Ovary (tissue), 10 donors: ENCODE measurements at regions of chr17 and their contacts with region 1.

Region 1: DNA sequence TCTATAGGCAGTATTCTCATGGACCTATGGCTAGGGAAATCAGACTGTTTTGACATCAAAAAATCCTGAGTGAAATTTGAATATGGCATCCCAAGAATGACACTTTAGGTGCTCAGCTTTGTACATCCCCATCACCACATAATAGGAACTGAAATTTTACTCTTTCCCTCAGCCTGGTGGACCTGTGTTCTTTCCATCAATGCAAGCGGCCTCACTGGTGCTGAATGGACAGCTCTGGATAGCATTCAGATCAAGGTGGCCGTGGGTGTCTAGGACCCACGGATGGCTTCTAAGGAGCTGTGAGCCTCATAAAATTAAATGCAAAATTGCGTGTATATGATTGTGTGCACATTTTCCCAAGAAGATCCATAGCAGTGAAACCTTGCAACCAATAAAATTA is 152.6 kb downstream of the MAP2K6 start:
- DNase-seq: no peak
- H3K4me3 ChIP-seq: no peak overlapping the region
- H3K27ac ChIP-seq: no peak overlapping the region
- H3K4me1 ChIP-seq: no peaks in the 10 kb centered on the region
- H3K27me3 ChIP-seq: no peaks in the 10 kb centered on the region
- CTCF ChIP-seq: no peak
- EP300 ChIP-seq: no peak
- POLR2A ChIP-seq: no peak

Region 2: DNA sequence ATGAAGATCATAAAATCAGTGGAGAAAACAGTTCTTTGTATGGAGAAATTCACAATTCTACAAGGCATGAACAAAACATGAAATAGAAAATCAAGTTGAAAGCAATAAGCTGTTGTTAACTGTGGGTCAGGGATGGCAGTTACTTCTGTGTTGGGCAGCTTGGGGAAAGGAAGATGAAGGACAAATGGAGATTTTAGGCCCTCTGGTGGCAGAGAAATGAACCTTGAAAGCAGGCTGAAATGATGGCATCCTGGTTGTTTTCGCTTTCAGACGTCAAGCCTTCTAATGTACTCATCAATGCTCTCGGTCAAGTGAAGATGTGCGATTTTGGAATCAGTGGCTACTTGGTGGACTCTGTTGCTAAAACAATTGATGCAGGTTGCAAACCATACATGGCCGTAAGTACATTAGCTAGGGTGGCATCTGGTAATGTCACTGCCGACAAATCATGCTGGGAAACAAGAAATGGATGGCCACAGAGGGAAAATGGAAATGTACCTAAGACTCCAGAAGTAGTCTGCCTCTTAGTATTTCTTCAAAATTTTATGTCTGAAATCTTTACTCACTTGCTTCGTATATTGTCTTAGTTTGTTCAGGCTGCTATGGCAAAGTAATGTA is 43.8 kb before region 1 on chr17:
- intact Hi-C with region 1: no loop called
- DNase-seq: peak in 1 of 5 donors; percentile 24
- H3K4me3 ChIP-seq: no peak overlapping the region
- H3K27ac ChIP-seq: no peak overlapping the region
- H3K4me1 ChIP-seq: no peaks in the 10 kb centered on the region
- H3K27me3 ChIP-seq: no peaks in the 10 kb centered on the region
- CTCF ChIP-seq: peak in 2 of 3 donors; percentile 42 to 61
- EP300 ChIP-seq: no peak
- POLR2A ChIP-seq: no peak

Region 3: GRCh38 chr17:70168977-70169708 is 602.0 kb after region 1 on chr17 and contains the start of gene KCNJ2:
- intact Hi-C with region 1: loop called in 1 of 4 experiments (anchors 10 kb)
- DNase-seq: peak; percentile 81 to 88 (median 86)
- H3K4me3 ChIP-seq: peak within 1 kb of the TSS; percentile 57
- H3K27ac ChIP-seq: peak within 1 kb of the TSS; percentile 78 to 86
- H3K4me1 ChIP-seq: peaks cover 5% of the 10 kb centered on the region
- H3K27me3 ChIP-seq: no peaks in the 10 kb centered on the region
- CTCF ChIP-seq: no peak
- EP300 ChIP-seq: no peak
- POLR2A ChIP-seq: peak; percentile 56
- total RNA-seq, gene KCNJ2: 1.3 to 3.8 (median 2.7) TPM